ENCODE measurements at regions of chr6 and their contacts with region 1.

Region 1: GRCh38 chr6:157764178-157765033 is 58.6 kb upstream of the SNX9 start:
- DNase-seq: peak; percentile 84 to 93
- H3K4me3 ChIP-seq: peak overlapping the region in 1 of 3 donors; percentile 7
- H3K27ac ChIP-seq: peak overlapping the region; percentile 89 to 93
- H3K4me1 ChIP-seq: peaks cover 17 to 20% of the 10 kb centered on the region in 2 donors
- H3K27me3 ChIP-seq: no peaks in the 10 kb centered on the region
- CTCF ChIP-seq: no peak
- POLR2A ChIP-seq: no peak

Region 2: DNA sequence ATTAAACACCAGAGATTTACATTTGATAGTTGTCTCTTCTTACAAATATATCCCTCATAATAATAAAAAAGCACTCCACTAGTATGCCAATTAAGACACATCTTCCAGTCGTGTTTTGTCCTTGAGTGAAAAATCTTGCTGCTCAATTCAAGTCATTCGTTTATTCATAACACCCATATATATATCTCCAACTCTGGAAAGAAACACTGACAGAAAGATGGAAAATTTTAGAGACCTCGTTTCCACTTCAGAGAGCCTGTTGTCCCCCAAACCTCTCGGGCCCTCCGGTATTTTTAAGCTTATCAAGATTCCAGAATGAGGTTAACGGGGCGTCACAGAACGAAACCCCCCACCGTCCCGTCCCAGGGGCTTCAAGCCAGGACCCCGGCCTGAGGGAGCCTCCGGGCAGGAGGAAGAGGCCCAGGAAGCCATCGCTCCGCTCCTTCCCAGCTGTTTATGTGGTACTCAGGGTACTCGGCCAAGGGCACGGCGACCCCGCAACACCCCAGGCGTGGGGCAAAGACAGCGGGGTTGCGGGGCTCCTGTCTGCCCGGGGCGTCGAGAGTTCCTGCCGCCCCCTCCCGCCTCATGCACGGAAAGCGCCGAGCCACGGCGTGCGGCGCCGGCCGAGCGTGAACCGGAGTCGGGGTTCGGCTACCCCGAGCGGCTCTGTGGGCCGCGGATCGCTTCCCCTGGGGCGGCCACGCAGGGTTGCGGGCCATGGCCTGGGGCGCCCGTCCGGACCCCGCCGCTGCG is 58.0 kb after region 1 on chr6:
- intact Hi-C with region 1: loop called (anchors 2 kb)
- DNase-seq: no peak
- H3K4me3 ChIP-seq: peak overlapping the region; percentile 67 to 99 (median 98)
- H3K27ac ChIP-seq: peak overlapping the region; percentile 91 to 100
- H3K4me1 ChIP-seq: no peaks in the 10 kb centered on the region
- H3K27me3 ChIP-seq: no peaks in the 10 kb centered on the region
- CTCF ChIP-seq: no peak
- POLR2A ChIP-seq: no peak

Region 3: DNA sequence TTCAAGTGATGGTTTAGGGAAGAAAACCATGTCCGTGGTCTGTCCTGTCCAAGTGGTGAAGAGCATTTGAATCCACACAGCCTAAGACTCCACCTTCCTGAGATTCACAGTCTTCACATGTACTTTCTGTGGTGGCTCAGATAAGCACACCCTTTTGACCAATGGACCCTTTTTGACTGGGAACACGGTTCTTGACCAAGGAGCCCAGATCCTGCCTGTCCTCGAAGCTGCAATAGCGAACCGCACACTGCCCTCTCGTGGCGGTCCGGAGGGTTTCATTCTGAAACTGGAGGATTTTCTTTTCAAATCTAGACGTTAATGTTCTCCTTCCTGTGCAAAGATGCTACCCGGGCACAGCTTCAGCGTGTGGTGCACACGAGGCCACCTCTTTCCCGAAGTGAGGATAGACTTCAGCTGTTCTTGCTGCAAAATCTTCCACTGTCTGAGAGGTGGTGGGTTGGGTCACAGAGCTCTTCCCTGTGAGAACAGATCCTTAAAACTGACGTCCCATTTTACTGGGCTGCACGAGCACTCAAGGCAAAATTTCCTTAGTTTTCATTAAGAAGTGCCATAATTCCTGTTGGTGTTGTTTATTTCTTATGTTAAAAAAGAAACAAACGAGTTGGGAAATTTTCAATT is 307.8 kb after region 1 on chr6:
- intact Hi-C with region 1: loop called (anchors 10 kb)
- DNase-seq: peak in 1 of 2 donors; percentile 70
- H3K4me3 ChIP-seq: no peak overlapping the region
- H3K27ac ChIP-seq: no peak overlapping the region
- H3K4me1 ChIP-seq: no peaks in the 10 kb centered on the region
- H3K27me3 ChIP-seq: no peaks in the 10 kb centered on the region
- CTCF ChIP-seq: peak; percentile 55 to 84 (median 78)
- POLR2A ChIP-seq: no peak

Measured in breast epithelium (tissue), 4 donors.